Activated naive CD8-positive, alpha-beta T cell treated with anti-CD3 and anti-CD28 coated beads, Interleukin-2, amount 10 ng/mL, durations not matched to agents 7 days and 5 days (primary cell): ENCODE measurements at regions of chr17 and their contacts with region 1.

Region 1: DNA sequence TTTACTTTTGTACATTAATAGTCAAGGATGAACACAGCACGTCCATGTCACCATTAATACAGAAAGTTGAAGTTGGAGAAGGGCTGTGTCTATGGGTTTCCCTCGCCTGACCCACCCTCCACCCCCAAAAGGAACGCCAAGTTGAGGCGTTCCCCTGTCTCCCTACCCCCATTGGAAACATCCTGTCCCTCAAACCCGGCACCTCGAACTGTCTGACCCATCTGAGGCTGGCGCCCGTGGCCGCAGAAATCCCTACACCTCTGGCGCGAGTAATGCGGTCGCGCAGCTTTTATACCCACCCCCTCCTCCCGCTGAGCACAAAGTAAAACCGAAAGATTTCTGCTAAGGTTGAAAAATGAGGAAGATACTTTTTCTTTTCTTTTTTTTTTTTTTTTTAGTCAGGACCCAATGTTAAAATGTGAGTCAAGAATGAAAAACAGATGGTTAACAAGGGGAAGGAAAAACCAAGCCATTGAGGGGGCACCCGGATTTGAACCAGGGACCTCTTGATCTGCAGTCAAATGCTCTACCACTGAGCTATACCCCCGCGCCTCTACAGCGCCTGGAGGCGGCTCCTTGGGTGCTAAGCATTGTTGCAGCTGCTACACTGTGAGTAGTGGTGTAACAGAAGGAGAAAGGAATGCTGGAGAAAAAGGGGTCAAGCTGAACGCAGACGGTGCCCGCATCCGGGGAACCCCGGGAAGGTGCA is 887 bp upstream of the LASP1 start:
- DNase-seq: peak; percentile 91
- ATAC-seq: peak; percentile 45
- H3K4me3 Mint-ChIP-seq: peak overlapping the region; percentile 97
- H3K27ac Mint-ChIP-seq: peak overlapping the region; percentile 91
- H3K4me1 Mint-ChIP-seq: peaks cover 42% of the 10 kb centered on the region
- H3K27me3 Mint-ChIP-seq: no peaks in the 10 kb centered on the region

Region 2: DNA sequence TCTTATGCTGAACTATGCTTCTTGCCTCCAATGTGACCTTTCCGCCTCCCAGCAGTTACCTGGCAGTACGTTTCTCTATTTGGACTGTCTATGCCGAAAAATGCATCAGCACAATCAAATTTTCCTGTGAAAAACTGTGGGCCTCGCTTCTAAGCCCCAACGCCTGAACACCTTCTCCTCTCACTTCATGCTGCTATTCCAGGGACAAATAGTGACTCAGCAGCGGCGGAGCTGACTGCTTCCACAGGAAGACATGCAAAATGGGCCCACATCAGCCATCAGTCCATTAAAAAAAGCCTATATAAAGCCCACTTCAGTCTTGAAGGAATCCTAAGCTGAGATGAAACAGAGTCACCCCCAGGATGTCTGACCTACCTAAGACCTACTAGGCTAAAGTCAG is 59.1 kb before region 1 on chr17:
- POLR2A ChIA-PET with region 1: no interaction called
- DNase-seq: no peak
- ATAC-seq: no peak
- H3K4me3 Mint-ChIP-seq: no peak overlapping the region
- H3K27ac Mint-ChIP-seq: no peak overlapping the region
- H3K4me1 Mint-ChIP-seq: no peaks in the 10 kb centered on the region
- H3K27me3 Mint-ChIP-seq: no peaks in the 10 kb centered on the region

Region 3: DNA sequence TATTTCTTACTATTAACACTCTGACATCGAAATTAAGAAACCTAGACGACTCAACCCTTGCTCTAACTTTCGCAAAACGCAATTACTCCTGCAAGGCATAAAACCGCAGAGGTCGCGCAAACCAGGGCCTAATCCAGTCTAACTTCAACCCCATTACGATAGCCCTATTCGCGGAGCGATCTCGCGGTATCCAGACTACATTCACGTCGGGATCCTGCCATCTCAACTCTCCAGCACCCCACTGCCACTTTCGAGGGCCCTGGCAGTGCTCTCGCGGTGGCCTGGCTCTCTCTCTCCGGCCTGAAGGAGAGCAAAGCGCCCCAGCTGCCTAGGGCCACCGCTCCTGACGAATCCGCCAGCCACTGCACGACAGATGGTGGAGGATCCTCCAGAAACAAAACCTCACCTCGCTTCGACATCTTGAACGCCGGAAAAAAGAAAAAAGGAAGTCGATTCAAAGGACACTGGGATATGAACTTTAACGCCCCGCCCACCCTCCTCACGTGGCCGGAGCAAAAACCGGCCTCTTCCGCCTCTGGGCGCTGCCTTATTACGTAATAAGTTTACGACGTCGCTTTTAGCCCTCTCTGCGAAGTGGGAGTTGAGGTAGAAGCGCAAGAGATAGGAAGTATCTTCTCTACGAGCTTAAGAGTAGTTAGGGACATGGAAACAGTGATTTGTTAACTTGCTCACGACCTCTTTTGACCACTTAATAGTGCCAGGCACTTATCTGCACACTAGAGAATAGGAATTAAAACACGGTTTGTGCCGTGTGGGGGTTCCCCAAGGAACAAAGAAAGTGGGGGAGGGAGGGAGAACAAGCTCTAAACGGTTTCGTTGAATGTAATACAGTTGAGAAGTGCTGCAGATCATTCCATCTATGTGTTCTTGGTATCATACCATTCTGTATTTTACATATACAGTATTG is 15.4 kb before region 1 on chr17 and contains the start of gene RPL23:
- POLR2A ChIA-PET with region 1: interaction called, 147 read pairs
- DNase-seq: peak; percentile 82
- ATAC-seq: peak; percentile 79
- H3K4me3 Mint-ChIP-seq: peak within 1 kb of the TSS; percentile 95
- H3K27ac Mint-ChIP-seq: peak within 1 kb of the TSS; percentile 99
- H3K4me1 Mint-ChIP-seq: peaks cover 35% of the 10 kb centered on the region
- H3K27me3 Mint-ChIP-seq: no peaks in the 10 kb centered on the region
- total RNA-seq, gene RPL23: 1,166 to 1,188 TPM

Region 4: GRCh38 chr17:38893607-38894006 is 24.6 kb after region 1 on chr17:
- POLR2A ChIA-PET with region 1: interaction called, 60 read pairs
- DNase-seq: peak; percentile 68
- ATAC-seq: peak; percentile 53
- H3K4me3 Mint-ChIP-seq: peak overlapping the region; percentile 54
- H3K27ac Mint-ChIP-seq: peak overlapping the region; percentile 81
- H3K4me1 Mint-ChIP-seq: peaks cover 79% of the 10 kb centered on the region
- H3K27me3 Mint-ChIP-seq: no peaks in the 10 kb centered on the region

Region 5: GRCh38 chr17:38922538-38923297 is 53.7 kb after region 1 on chr17:
- POLR2A ChIA-PET with region 1: interaction called, 14 read pairs
- DNase-seq: no peak
- ATAC-seq: no peak
- H3K4me3 Mint-ChIP-seq: no peak overlapping the region
- H3K27ac Mint-ChIP-seq: peak overlapping the region; percentile 58
- H3K4me1 Mint-ChIP-seq: peaks cover 38% of the 10 kb centered on the region
- H3K27me3 Mint-ChIP-seq: no peaks in the 10 kb centered on the region